ENCODE measurements at regions of chr19 and their contacts with region 1.

Region 1: GRCh38 chr19:24033301-24033962 is 53.6 kb upstream of the ZNF254 start:
- DNase-seq: peak; percentile 91
- ATAC-seq: peak; percentile 96
- H3K4me3 ChIP-seq: peak overlapping the region; percentile 88
- H3K27ac ChIP-seq: peak overlapping the region; percentile 90
- H3K4me1 ChIP-seq: no peaks in the 10 kb centered on the region; the same call in 1 of the 2 replicates
- H3K27me3 ChIP-seq: no peaks in the 10 kb centered on the region
- CTCF ChIP-seq: 0 out of 2 replicates have a peak, but pooled peaks have one; percentile 17

Region 2: DNA sequence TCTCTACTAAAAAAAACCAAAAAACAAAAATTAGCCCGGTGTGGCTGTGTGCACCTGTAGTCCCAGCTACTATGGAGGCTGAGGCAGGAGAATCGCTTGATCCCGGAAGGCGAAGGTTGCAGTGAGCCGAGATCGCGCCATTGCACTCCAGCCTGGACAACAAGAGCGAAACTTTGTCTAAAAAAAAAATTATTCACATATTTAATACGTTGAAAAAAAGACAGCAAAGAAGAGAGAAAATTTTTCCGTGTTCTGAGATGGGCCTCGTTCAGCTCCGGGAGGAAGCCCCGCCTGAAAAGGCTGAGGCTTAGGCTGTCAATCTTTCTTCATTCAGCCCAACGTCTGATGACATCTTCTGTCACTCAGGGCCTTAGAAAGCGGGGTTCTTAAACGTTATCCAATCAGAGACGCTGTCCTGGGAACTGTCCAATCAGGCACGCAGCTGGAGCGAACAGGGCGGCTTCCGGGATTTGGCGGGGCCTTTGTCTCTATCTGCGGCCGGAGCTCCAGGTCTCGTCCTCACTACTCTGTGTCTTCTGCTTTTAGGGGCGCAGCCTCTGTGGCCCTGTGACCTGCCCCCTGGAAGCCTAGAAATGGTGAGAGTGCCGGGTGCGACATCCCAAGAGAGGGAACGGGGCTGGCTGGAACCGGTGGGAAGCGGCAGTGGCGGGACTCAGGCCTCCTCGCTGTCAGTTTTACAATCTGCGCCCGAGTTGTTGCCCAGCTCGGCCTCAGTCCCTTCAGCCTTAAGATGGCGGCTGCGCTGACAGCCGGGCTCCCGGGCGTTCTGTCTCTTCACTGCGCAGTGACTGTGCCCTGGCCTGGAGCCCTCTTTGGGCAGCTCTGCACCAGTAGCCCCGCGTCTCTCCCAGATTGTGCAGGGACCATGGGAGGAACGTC is 118.8 kb before region 1 on chr19 and contains the start of gene ZNF726:
- CTCF ChIA-PET with region 1: no interaction called
- POLR2A ChIA-PET with region 1: no interaction called
- intact Hi-C with region 1: loop called (anchors 5 kb)
- DNase-seq: peak; percentile 96
- ATAC-seq: peak; percentile 98
- H3K4me3 ChIP-seq: peak within 1 kb of the TSS; percentile 86
- H3K27ac ChIP-seq: peak within 1 kb of the TSS; percentile 44
- H3K4me1 ChIP-seq: no peaks in the 10 kb centered on the region
- H3K27me3 ChIP-seq: no peaks in the 10 kb centered on the region
- CTCF ChIP-seq: no peak
- total RNA-seq, gene ZNF726: 12.7 and 12.8 TPM in 2 replicates

Region 3: DNA sequence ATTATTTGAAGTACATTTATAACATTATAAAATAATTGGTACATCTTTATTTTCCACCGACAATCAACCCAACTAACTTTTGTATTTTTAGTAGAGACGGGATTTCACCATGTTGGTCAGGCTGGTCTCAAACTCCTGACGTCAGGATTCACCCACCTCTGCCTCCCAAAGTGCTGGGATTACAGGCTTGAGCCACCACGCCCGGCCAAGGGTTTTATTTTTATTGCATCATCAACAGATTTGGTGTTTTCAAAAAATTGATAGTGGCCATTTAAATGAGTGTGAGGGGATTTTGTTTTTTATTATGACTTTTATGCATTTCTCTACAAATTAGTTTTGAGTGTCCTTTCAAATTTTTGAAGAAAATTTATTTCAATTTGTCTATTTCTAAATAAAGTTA is 108.1 kb before region 1 on chr19:
- CTCF ChIA-PET with region 1: no interaction called
- POLR2A ChIA-PET with region 1: no interaction called
- intact Hi-C with region 1: no loop called
- DNase-seq: no peak
- ATAC-seq: no peak
- H3K4me3 ChIP-seq: no peak overlapping the region
- H3K27ac ChIP-seq: no peak overlapping the region
- H3K4me1 ChIP-seq: no peaks in the 10 kb centered on the region
- H3K27me3 ChIP-seq: no peaks in the 10 kb centered on the region
- CTCF ChIP-seq: no peak

Region 4: DNA sequence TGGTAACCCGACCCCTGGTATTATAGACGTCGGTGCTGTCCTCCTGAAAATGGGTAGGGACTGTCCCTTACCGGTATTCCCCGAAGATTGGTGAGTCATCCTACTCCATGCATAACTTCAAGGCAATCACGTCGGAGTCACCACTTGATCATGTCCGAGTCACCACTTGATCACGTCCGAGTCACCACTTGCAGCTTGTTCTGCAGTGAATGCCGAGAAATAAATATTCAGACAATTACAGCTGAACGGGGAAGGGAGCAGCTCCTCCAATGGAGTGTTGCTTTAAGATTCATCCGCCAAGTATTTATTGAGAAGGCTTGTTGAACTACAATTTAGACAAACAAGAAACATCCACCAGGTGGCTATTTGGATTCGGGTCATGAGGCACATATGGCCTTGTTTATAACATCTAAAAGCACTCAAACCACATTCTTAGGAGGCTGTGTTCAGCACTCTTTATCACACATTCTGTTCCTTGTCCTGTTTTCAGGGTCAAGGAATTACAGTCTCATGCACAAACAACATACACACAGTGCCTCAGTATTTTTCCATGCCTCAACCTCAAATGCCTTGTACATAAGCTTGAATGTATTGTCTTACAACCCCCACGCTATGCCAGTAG is 75.7 kb before region 1 on chr19:
- CTCF ChIA-PET with region 1: no interaction called
- POLR2A ChIA-PET with region 1: no interaction called
- intact Hi-C with region 1: loop called (anchors 5 kb)
- DNase-seq: peak; percentile 94
- ATAC-seq: peak; percentile 95
- H3K4me3 ChIP-seq: peak overlapping the region; percentile 31
- H3K27ac ChIP-seq: peak overlapping the region; percentile 61
- H3K4me1 ChIP-seq: peaks cover 17% of the 10 kb centered on the region
- H3K27me3 ChIP-seq: no peaks in the 10 kb centered on the region
- CTCF ChIP-seq: 0 out of 2 replicates have a peak, but pooled peaks have one; percentile 20

Region 5: DNA sequence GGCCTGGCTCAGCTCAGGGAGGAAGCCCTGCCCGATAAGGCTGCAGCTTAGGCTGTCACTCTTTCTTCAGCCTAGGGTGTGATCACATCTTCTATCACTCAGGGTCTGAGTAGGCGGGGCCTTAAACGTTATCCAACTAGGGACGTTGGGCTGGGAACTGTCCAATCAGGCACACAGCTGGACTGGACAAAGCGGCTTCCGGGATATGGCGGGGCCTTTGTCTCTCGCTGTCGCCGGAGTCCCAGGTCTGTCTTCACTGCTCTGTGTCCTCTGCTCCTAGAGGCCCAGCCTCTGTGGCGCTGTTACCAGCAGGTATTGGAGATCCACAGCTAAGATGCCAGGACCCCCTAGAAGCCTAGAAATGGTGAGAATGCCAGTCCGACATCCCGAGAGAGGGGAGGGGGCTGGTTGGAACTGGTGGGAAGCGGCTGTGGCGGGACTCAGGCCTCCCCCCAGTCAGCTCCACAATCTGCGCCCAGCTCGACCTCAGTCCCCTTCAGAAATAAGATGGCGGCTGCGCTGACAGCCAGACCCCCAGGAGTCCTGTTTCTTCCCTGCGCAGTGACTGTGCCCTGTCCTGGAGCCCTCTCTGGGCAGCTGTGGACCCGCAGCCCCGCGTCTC is 53.7 kb after region 1 on chr19 and contains the start of gene ZNF254:
- CTCF ChIA-PET with region 1: no interaction called
- POLR2A ChIA-PET with region 1: no interaction called
- intact Hi-C with region 1: no loop called
- DNase-seq: peak; percentile 94
- ATAC-seq: peak; percentile 99
- H3K4me3 ChIP-seq: peak within 1 kb of the TSS; percentile 90
- H3K27ac ChIP-seq: peak within 1 kb of the TSS; percentile 63
- H3K4me1 ChIP-seq: no peaks in the 10 kb centered on the region
- H3K27me3 ChIP-seq: no peaks in the 10 kb centered on the region
- CTCF ChIP-seq: no peak
- total RNA-seq, gene ZNF254: 8.1 and 9.3 TPM in 2 replicates

Measured in PC-3 (cell line).